ENCODE measurements at regions of chr9 and their contacts with region 1.

Region 1: GRCh38 chr9:98034593-98035546 is 21.7 kb upstream of the NANS start:
- DNase-seq: peak; percentile 89
- H3K4me3 ChIP-seq: peak overlapping the region; percentile 34
- H3K27ac ChIP-seq: no peak overlapping the region
- H3K4me1 ChIP-seq: peaks cover 30% of the 10 kb centered on the region
- CTCF ChIP-seq: peak; percentile 91

Region 2: GRCh38 chr9:97954550-97954989 is 80.3 kb before region 1 on chr9:
- CTCF ChIA-PET with region 1: interaction called, 3 read pairs
- POLR2A ChIA-PET with region 1: interaction called, 5 read pairs
- intact Hi-C with region 1: loop called (anchors 1 kb)
- DNase-seq: peak; percentile 90
- H3K4me3 ChIP-seq: no peak overlapping the region
- H3K27ac ChIP-seq: peak overlapping the region; percentile 7
- H3K4me1 ChIP-seq: peaks cover 26% of the 10 kb centered on the region
- CTCF ChIP-seq: peak; percentile 93

Region 3: DNA sequence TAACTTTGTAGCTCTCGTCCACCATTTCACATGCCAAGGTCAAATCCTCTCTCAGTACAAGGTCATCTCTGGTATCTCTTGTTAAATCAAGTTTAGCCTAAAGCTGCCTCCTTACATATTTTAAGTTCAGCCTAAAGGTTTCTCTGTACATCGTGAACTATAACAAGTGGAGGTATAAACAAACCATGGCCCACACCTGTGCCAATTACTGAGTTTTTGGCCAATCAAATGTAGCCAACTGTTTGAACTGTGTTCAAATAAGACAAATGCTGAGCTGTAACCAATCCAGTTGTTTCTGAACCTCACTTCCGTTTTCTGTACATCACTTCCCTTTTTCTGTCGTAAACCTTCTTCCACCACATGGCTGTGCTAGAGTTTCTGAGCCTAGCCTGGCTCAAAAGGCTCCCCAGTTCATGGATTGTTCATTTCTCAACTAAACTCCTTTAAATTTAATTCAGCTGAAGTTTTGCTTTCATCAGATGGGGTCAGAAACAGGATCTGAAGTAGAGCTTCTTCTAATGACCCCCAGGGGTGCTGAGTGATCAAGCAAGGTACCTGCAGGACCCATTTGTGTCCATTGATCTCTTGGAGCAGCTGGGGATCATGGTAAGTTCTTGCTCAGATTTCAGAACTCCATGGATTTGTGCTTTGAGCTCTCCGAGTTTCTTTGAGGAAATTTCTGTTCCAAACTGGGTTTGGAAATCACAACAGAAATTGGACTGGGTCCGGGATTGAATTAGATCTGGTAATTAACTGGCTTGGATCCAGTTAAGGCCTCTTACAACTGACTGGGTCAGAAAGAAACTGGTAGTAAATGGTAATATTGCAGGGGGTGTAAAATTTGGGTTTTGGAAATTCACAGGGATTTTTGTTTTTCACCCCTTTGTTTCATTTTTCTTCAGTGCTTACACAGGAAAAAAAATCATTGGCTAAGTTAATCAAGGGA is 10.6 kb after region 1 on chr9:
- CTCF ChIA-PET with region 1: interaction called, 3 read pairs
- POLR2A ChIA-PET with region 1: interaction called, 17 read pairs
- intact Hi-C with region 1: no loop called
- DNase-seq: peak; percentile 92
- H3K4me3 ChIP-seq: peak overlapping the region; percentile 72
- H3K27ac ChIP-seq: peak overlapping the region; percentile 75
- H3K4me1 ChIP-seq: peaks cover 55% of the 10 kb centered on the region
- CTCF ChIP-seq: peak; percentile 58

Measured in OCI-LY7 (cell line).